Activated naive CD4-positive, alpha-beta T cell treated with anti-CD3 and anti-CD28 coated beads for 36 hours (primary cell): ENCODE measurements at regions of chr19 and their contacts with region 1.

Region 1: DNA sequence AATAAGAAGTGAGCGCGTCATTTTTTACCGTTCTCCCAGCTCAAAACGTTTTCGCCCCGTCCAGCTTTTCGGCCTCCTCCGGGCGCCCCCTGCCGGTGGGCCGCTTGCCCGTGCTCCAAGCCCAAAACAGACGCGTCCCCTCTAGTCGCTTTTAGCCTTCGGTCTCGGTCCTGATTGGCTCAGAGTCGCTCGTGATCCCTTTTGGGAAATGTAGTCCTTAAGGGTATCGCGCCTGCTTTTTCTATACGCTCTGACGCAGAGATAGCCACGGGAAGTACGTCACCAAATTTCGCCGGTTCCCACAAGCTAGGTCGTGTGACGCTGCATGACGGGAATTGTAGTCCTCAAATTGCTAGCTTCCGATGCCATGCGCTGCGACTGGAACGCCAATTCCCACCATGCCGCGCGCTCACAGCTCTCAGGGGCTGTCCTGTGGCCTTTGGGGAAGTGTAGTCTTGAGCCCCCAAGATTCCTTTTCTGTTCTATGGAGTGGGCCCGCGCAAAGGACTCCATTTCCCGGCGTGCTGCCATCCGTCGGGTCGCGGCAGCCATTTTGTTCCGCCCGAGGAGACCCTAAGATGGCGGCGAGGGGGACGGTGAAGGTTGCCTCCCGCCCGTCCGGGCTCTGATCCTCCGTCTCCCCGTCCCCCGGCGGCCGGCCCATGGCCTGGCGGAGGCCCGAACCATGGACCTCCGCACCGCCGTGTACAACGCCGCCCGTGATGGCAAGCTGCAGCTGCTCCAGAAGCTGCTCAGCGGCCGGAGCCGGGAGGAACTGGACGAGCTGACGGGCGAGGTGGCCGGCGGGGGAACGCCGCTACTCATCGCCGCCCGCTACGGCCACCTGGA is at the start of gene FEM1A:
- DNase-seq: peak; percentile 100
- H3K4me3 Mint-ChIP-seq: peak within 1 kb of the TSS; percentile 80
- H3K27ac Mint-ChIP-seq: peak within 1 kb of the TSS; percentile 88
- H3K4me1 Mint-ChIP-seq: peaks cover 39% of the 10 kb centered on the region
- H3K27me3 Mint-ChIP-seq: no peaks in the 10 kb centered on the region
- total RNA-seq, gene FEM1A: 8.1 to 9.1 TPM

Region 2: GRCh38 chr19:4457654-4458395 is 333.6 kb before region 1 on chr19 and contains the start of gene UBXN6:
- CTCF ChIA-PET with region 1: no interaction called
- intact Hi-C with region 1: loop called (anchors 5 kb)
- DNase-seq: peak; percentile 99
- H3K4me3 Mint-ChIP-seq: peak within 1 kb of the TSS; percentile 86
- H3K27ac Mint-ChIP-seq: peak within 1 kb of the TSS; percentile 85
- H3K4me1 Mint-ChIP-seq: peaks cover 12% of the 10 kb centered on the region
- H3K27me3 Mint-ChIP-seq: no peaks in the 10 kb centered on the region
- total RNA-seq, gene UBXN6: 28.7 to 36.2 TPM

Region 3: GRCh38 chr19:4638828-4639530 is 152.4 kb before region 1 on chr19 and contains the start of gene TNFAIP8L1:
- CTCF ChIA-PET with region 1: no interaction called
- intact Hi-C with region 1: loop called (anchors 1 kb)
- DNase-seq: peak; percentile 99
- H3K4me3 Mint-ChIP-seq: peak within 1 kb of the TSS; percentile 80
- H3K27ac Mint-ChIP-seq: peak within 1 kb of the TSS; percentile 91
- H3K4me1 Mint-ChIP-seq: peaks cover 35% of the 10 kb centered on the region
- H3K27me3 Mint-ChIP-seq: no peaks in the 10 kb centered on the region
- total RNA-seq, gene TNFAIP8L1: 19.9 to 20.4 TPM

Region 4: DNA sequence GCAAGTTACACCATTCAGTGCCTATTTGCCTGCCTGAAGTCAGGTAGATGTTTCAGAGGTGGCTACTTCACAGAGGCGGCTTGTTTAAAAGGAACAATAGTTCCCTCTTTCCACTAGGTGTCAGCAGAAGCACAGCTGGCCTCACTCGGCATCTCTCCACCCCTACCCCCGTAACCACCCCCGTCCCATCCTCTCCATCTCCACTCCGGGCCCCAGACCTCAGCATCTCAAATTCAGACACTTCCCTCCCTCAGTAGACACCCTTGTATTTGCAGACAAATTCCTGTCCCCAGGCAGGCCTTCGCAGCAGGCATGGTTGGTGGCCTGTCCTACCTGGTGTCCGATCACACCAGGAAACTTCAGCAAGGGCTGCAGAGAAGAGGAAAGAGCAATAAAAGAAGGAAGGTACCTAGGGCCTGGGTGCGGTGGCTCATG is 58.7 kb before region 1 on chr19:
- CTCF ChIA-PET with region 1: interaction called, 34 read pairs
- intact Hi-C with region 1: loop called (anchors 1 kb)
- DNase-seq: peak; percentile 62
- H3K4me3 Mint-ChIP-seq: peak overlapping the region; percentile 23
- H3K27ac Mint-ChIP-seq: no peak overlapping the region
- H3K4me1 Mint-ChIP-seq: peaks cover 8% of the 10 kb centered on the region
- H3K27me3 Mint-ChIP-seq: no peaks in the 10 kb centered on the region

Region 5: GRCh38 chr19:4815426-4816201 is 24.2 kb after region 1 on chr19:
- CTCF ChIA-PET with region 1: interaction called, 13 read pairs
- intact Hi-C with region 1: no loop called
- DNase-seq: peak; percentile 88
- H3K4me3 Mint-ChIP-seq: peak overlapping the region; percentile 67
- H3K27ac Mint-ChIP-seq: peak overlapping the region; percentile 66
- H3K4me1 Mint-ChIP-seq: peaks cover 16% of the 10 kb centered on the region
- H3K27me3 Mint-ChIP-seq: no peaks in the 10 kb centered on the region

Region 6: DNA sequence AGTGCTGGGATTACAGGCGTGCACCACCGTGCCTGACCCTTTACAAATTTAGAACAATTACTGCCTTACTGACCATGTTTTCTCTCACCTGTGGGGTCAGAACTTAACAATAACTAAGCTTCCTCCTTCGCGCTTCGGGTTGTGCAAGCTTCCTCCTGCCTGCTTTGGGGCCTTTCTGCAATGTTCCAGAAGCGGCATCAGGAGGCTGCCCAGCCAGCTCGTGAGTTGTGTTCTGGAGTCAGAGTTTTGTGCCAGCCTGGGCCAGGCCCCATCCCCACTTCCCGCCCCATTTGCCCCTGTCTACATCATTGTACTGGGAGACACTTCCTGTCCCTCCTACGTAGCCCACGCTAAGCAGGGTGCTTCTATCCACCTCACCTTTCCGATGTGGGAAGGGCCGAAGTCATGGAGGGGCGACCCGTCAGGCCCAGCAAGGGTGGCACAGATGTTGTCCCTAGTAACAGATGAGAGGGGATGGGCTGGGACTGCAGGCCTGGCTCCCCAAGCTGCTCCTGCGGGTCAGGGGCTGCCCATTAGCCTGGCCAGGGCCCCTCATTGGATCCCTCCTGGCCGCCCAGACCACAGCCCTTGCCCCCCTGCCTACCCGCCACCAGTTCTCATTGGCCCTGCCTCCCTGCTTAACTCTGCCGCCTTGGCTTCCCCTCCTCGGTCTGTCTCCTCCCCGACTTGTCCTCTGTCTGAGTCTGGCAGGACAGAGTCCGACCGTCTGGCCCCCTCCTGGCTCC is 131.3 kb after region 1 on chr19:
- CTCF ChIA-PET with region 1: no interaction called
- intact Hi-C with region 1: no loop called
- DNase-seq: no peak
- H3K4me3 Mint-ChIP-seq: no peak overlapping the region
- H3K27ac Mint-ChIP-seq: no peak overlapping the region
- H3K4me1 Mint-ChIP-seq: peaks cover 5% of the 10 kb centered on the region
- H3K27me3 Mint-ChIP-seq: no peaks in the 10 kb centered on the region